Calu3 (cell line): ENCODE measurements at regions of chr2 and their contacts with region 1.

Region 1: GRCh38 chr2:206780671-206781070 is 15.3 kb downstream of the FASTKD2 start:
- DNase-seq: no peak
- H3K4me3 Mint-ChIP-seq: no peak overlapping the region
- H3K27ac Mint-ChIP-seq: no peak overlapping the region
- H3K4me1 Mint-ChIP-seq: no peaks in the 10 kb centered on the region
- H3K27me3 Mint-ChIP-seq: no peaks in the 10 kb centered on the region
- CTCF ChIP-seq: no peak

Region 2: DNA sequence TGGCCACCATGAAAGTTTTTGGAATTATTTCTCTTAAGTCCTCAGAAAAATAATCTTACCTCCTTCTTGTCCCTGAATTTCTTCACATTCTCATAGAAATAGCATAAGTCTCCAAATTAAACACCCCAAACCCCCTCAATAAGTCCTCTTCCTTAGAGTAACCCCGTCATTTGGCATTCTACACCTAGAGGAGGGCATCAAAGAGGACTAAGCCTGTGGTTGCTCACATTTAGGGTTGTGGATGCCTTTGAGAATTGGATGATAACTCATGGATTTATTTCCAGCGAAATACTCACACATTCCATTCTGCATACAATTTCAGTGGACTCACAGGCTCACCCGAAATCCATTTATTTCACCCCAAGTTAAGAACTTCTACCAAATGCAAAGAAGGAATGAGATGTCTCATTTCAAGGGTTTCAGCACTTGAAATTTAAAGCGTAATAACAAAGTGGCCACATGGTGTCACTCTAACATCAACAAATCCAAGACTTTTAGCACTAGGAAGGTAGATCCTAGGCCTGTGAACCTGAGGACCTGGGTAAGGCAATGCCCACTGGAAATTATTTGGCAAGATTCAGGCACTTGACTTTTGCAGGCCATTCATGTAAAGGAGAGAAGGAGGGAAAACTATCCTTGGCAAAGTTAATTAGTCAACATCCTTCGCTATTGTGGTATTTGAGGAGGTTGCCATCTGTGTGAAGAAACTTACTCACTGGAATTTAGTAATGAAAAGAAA is 87.1 kb before region 1 on chr2:
- CTCF ChIA-PET with region 1: interaction called, 4 read pairs
- intact Hi-C with region 1: loop called (anchors 1 kb)
- DNase-seq: peak; percentile 58
- H3K4me3 Mint-ChIP-seq: no peak overlapping the region
- H3K27ac Mint-ChIP-seq: no peak overlapping the region
- H3K4me1 Mint-ChIP-seq: no peaks in the 10 kb centered on the region
- H3K27me3 Mint-ChIP-seq: peaks cover 11% of the 10 kb centered on the region
- CTCF ChIP-seq: peak; percentile 70